ENCODE measurements at regions of chr4 and their contacts with region 1.

Region 1: DNA sequence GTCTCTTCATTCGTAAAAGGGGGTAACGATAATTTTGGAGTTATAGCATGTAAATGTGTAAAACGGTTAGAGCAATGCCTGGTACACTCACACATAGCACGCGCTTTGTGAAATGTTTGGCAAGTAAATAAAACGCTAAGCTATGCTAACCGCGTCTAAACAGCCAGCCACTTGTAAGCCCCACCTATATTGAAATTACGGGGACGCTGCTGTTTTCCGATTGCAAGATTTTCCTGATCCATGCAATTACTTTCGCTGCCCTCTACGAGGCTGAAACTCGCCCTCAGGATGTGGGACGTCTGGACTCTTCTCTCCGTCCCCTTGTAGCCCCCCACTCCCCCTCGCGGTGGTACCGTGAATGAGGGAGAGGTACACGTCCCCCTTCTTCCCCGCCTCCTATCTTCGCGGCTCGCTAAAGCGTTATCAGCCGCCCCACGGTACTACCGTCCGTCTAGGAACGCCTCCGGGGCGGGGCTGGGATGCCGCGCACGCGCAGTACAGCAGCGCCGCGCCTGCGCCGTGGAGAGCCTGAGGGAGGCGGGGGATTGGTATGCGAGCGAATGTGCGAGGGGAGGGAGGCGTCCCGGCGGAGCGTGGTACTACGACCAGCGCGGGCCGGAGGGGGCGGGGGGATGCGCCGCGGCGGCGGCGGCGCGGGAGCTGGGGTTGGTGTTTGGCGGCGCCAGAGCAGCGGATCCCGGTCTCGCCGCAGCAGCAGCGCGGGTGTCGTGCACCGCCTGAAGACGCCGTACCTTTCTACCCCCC is at the start of gene STIM2:
- DNase-seq: peak; percentile 99
- H3K4me3 Mint-ChIP-seq: peak within 1 kb of the TSS; percentile 93
- H3K27ac Mint-ChIP-seq: peak within 1 kb of the TSS; percentile 95
- H3K4me1 Mint-ChIP-seq: peaks cover 52% of the 10 kb centered on the region
- H3K27me3 Mint-ChIP-seq: peaks cover 4% of the 10 kb centered on the region
- total RNA-seq, gene STIM2: 35.5 and 37.1 TPM in 2 replicates

Region 2: GRCh38 chr4:25913851-25914669 is 946.3 kb before region 1 on chr4 and contains the start of gene SMIM20:
- intact Hi-C with region 1: loop called (anchors 10 kb)
- DNase-seq: peak; percentile 90
- H3K4me3 Mint-ChIP-seq: peak within 1 kb of the TSS; percentile 92
- H3K27ac Mint-ChIP-seq: peak within 1 kb of the TSS; percentile 98
- H3K4me1 Mint-ChIP-seq: peaks cover 21% of the 10 kb centered on the region
- H3K27me3 Mint-ChIP-seq: peaks cover 12% of the 10 kb centered on the region
- total RNA-seq, gene SMIM20: 17.0 and 18.7 TPM in 2 replicates

Region 3: GRCh38 chr4:26459054-26459755 is 401.1 kb before region 1 on chr4:
- intact Hi-C with region 1: loop called (anchors 10 kb)
- DNase-seq: no peak
- H3K4me3 Mint-ChIP-seq: no peak overlapping the region
- H3K27ac Mint-ChIP-seq: no peak overlapping the region
- H3K4me1 Mint-ChIP-seq: peaks cover 12% of the 10 kb centered on the region
- H3K27me3 Mint-ChIP-seq: peaks cover 11% of the 10 kb centered on the region

Region 4: GRCh38 chr4:26746802-26747213 is 113.5 kb before region 1 on chr4:
- intact Hi-C with region 1: loop called (anchors 5 kb)
- DNase-seq: no peak
- H3K4me3 Mint-ChIP-seq: no peak overlapping the region
- H3K27ac Mint-ChIP-seq: no peak overlapping the region
- H3K4me1 Mint-ChIP-seq: peaks cover 23% of the 10 kb centered on the region
- H3K27me3 Mint-ChIP-seq: peaks cover 19% of the 10 kb centered on the region

Region 5: DNA sequence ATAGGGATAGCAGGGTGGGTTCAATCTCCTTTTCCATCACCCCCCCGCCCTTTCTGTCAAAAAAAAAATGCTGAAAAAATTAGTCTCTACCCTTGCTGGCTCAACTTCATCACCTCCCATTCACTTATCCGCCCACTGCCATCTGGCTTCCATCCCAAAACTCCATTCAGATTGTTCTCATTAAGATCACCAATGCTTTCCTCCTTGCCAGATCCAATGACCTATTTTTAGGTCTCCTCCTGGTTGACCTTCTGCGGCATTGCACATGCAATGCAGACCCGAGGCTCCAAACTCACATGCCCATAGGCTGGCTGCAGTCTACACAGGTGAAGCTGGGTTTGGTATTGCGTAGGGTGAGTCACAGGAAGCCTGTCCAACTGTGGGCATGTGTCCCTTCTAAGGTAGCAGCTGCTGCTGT is 20.8 kb before region 1 on chr4:
- intact Hi-C with region 1: no loop called
- DNase-seq: no peak
- H3K4me3 Mint-ChIP-seq: no peak overlapping the region
- H3K27ac Mint-ChIP-seq: no peak overlapping the region
- H3K4me1 Mint-ChIP-seq: peaks cover 4% of the 10 kb centered on the region
- H3K27me3 Mint-ChIP-seq: peaks cover 7% of the 10 kb centered on the region

Region 6: GRCh38 chr4:26885912-26886274 is 25.6 kb after region 1 on chr4:
- intact Hi-C with region 1: loop called (anchors 1 kb)
- DNase-seq: no peak
- H3K4me3 Mint-ChIP-seq: peak overlapping the region; percentile 74
- H3K27ac Mint-ChIP-seq: peak overlapping the region; percentile 89
- H3K4me1 Mint-ChIP-seq: peaks cover 55% of the 10 kb centered on the region
- H3K27me3 Mint-ChIP-seq: no peaks in the 10 kb centered on the region

Region 7: GRCh38 chr4:27000820-27001219 is 140.5 kb after region 1 on chr4:
- intact Hi-C with region 1: loop called (anchors 2 kb)
- DNase-seq: no peak
- H3K4me3 Mint-ChIP-seq: no peak overlapping the region
- H3K27ac Mint-ChIP-seq: no peak overlapping the region
- H3K4me1 Mint-ChIP-seq: peaks cover 28% of the 10 kb centered on the region
- H3K27me3 Mint-ChIP-seq: no peaks in the 10 kb centered on the region

Region 8: GRCh38 chr4:27198971-27199370 is 338.6 kb after region 1 on chr4:
- intact Hi-C with region 1: no loop called
- DNase-seq: no peak
- H3K4me3 Mint-ChIP-seq: no peak overlapping the region
- H3K27ac Mint-ChIP-seq: no peak overlapping the region
- H3K4me1 Mint-ChIP-seq: no peaks in the 10 kb centered on the region
- H3K27me3 Mint-ChIP-seq: no peaks in the 10 kb centered on the region

Measured in activated T-helper 2 cell treated with anti-CD3 and anti-CD28 coated beads, Interferon-gamma antibody, Interleukin-2, Interleukin-4, amounts not matched to agents 10 μg/mL and 5 μg/mL and 100 μg/mL, durations not matched to agents 14 hours and 24 hours and 36 hours (primary cell).